ENCODE measurements at regions of chr16 and their contacts with region 1.

Region 1: DNA sequence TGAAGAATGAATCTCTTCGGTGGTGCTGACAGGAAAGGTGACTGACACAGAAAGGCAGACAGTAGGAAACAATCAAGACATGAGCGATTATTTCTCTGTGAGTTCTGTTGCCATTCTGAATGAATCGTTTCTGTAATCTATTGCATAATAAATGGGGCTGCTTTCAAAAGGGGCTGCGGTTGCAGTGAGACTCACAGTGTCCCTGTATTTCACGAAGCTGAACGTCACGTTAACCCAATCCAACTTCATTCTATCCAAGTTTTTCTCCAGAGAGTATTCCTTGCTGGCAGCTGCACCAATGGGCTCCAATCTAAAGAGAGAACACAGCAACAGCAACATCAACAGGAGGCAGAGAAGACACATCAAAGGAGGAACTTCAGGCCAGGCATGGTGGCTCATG is 75.4 kb downstream of the DNAH3 start:
- DNase-seq: no peak
- ATAC-seq: peak; percentile 54

Region 2: DNA sequence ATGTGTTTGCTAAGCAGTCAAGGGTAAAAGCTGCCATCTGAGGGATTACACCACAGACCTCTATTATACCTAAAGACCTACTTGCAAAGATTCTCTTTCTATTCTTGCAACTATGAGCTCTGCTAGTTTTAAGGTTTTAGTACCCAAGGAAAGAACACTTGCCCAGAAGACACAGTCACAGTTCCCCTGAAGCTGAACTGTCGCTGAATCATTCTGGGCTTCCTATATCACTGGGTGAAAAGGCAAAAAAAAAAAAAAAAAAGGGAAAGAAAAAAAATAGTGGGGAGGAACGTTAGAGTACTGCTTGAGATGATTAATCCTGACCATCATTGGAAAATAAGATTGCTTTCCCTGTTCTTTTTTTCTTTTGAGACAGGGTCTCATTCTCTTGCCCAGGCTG is 136.8 kb before region 1 on chr16:
- intact Hi-C with region 1: loop called (anchors 10 kb)
- DNase-seq: no peak
- ATAC-seq: no peak

Region 3: GRCh38 chr16:20971401-20971800 is 103.9 kb before region 1 on chr16:
- intact Hi-C with region 1: no loop called
- DNase-seq: no peak
- ATAC-seq: no peak

Region 4: GRCh38 chr16:21028728-21029127 is 46.5 kb before region 1 on chr16:
- intact Hi-C with region 1: loop called (anchors 5 kb)
- DNase-seq: no peak
- ATAC-seq: no peak